ENCODE measurements at regions of chr10 and their contacts with region 1.

Region 1: GRCh38 chr10:48533951-48534720 is 70.7 kb downstream of the ARHGAP22 start:
- H3K4me3 ChIP-seq: no peak overlapping the region
- H3K27ac ChIP-seq: no peak overlapping the region
- H3K4me1 ChIP-seq: no peaks in the 10 kb centered on the region
- CTCF ChIP-seq: no peak

Region 2: DNA sequence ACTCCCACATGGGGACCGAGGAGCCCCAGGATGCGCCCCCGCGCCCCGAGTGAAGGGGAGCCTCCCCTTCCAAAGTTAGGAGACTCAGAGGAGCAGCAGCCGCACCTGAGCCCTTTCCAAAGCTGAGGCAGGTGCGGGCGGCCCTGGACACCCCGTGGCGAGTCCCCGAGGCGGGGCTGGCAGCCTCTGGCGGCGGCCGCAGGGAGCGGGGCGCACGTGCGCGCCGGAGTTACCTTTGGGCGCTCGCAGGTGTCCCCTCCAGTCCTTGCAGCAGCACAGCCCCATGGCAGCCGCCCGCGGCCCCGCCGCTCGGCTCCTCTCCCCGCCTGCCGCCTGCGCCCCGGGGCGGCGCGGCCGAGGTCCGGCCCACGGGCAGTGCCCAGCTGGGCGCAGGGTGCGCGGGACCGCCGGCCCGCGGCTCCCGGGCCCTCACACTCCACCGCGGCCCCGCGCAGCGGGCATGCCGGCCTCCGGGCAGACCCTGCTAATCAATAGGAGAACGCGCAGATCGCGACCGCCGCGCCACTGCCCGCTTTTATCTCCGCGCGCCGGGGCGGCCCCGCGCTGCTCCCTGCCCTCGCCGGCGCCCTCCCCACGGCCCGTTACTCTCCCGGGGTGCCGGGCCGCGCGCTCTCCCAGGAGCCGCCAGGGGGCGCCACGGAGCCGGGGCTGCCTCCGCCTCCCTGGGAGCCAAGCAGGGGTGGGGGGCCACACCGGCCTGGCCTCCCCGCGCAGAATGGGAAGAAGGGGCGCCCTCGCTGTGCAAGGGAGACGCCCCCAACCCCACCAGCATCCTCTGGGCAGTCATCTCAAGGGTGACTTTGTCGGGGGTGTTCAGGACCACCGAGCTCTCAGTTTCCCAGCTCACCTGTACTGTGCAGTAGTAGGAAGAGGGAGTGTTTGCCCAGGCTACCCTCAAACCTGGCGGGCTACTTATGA is 10.0 kb before region 1 on chr10:
- CTCF ChIA-PET with region 1: interaction called, 14 read pairs
- POLR2A ChIA-PET with region 1: no interaction called
- H3K4me3 ChIP-seq: peak overlapping the region; percentile 51
- H3K27ac ChIP-seq: peak overlapping the region; percentile 54; the same call in 1 of the 2 replicates
- H3K4me1 ChIP-seq: no peaks in the 10 kb centered on the region
- CTCF ChIP-seq: peak; percentile 74